CD4-positive, alpha-beta memory T cell (primary cell): ENCODE measurements at regions of chr10 and their contacts with region 1.

Region 1: GRCh38 chr10:6401562-6402348 is 178.3 kb downstream of the PRKCQ start:
- DNase-seq: peak; percentile 57 to 70 (median 65)
- H3K4me3 ChIP-seq: no peak overlapping the region
- H3K4me3 Mint-ChIP-seq: peak overlapping the region in 2 of 8 donors; percentile 51 to 63
- H3K27ac ChIP-seq: no peak overlapping the region
- H3K27ac Mint-ChIP-seq: peak overlapping the region; percentile 32 to 90 (median 64)
- H3K4me1 ChIP-seq: peaks cover 16% of the 10 kb centered on the region
- H3K4me1 Mint-ChIP-seq: peaks cover 8 to 24% (median 13%) of the 10 kb centered on the region in 4 donors
- H3K27me3 ChIP-seq: no peaks in the 10 kb centered on the region
- H3K27me3 Mint-ChIP-seq: peaks cover 0 to 1% of the 10 kb centered on the region in 2 donors

Region 2: GRCh38 chr10:6108603-6109443 is 292.9 kb before region 1 on chr10:
- CTCF ChIA-PET with region 1: interaction called, 127 read pairs
- POLR2A ChIA-PET with region 1: interaction called, 6 read pairs
- intact Hi-C with region 1: loop called (anchors 1 kb)
- DNase-seq: peak; percentile 57 to 69 (median 65)
- H3K4me3 ChIP-seq: no peak overlapping the region
- H3K4me3 Mint-ChIP-seq: peak overlapping the region in 7 of 8 donors; percentile 67 to 85 (median 75)
- H3K27ac ChIP-seq: peak overlapping the region; percentile 45
- H3K27ac Mint-ChIP-seq: peak overlapping the region; percentile 43 to 95 (median 91)
- H3K4me1 ChIP-seq: peaks cover 28% of the 10 kb centered on the region
- H3K4me1 Mint-ChIP-seq: peaks cover 29 to 54% (median 37%) of the 10 kb centered on the region in 4 donors
- H3K27me3 ChIP-seq: no peaks in the 10 kb centered on the region
- H3K27me3 Mint-ChIP-seq: no peaks in the 10 kb centered on the region

Region 3: GRCh38 chr10:6151087-6151977 is 250.4 kb before region 1 on chr10:
- CTCF ChIA-PET with region 1: interaction called, 34 read pairs
- POLR2A ChIA-PET with region 1: interaction called, 3 read pairs
- intact Hi-C with region 1: loop called (anchors 2 kb)
- DNase-seq: peak in 4 of 5 donors; percentile 46 to 64 (median 56)
- H3K4me3 ChIP-seq: no peak overlapping the region
- H3K4me3 Mint-ChIP-seq: peak overlapping the region in 7 of 8 donors; percentile 36 to 75 (median 58)
- H3K27ac ChIP-seq: peak overlapping the region; percentile 1
- H3K27ac Mint-ChIP-seq: peak overlapping the region; percentile 86 to 93 (median 91)
- H3K4me1 ChIP-seq: peaks cover 47% of the 10 kb centered on the region
- H3K4me1 Mint-ChIP-seq: peaks cover 36 to 81% (median 49%) of the 10 kb centered on the region in 4 donors
- H3K27me3 ChIP-seq: no peaks in the 10 kb centered on the region
- H3K27me3 Mint-ChIP-seq: no peaks in the 10 kb centered on the region

Region 4: DNA sequence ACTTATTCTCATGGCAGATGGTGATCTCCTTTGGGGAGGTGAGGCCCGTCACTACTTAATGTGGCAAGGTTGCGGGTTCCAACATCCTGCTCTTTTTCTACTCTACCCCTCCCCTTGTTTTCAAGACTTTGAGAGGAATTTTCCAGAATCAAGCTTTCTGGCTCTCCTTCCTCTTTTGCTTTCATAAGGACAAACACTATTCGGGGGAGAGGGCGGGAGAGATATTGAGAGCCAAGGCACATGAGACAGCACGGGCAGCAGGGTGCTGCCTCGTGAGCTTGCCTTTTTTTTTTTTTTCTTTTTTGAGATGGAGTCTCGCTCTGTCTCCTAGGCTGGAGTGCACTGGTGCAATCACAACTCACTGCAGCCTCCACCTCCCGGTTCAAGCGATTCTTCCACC is 205.9 kb before region 1 on chr10:
- CTCF ChIA-PET with region 1: interaction called, 217 read pairs
- POLR2A ChIA-PET with region 1: interaction called, 12 read pairs
- intact Hi-C with region 1: no loop called
- DNase-seq: no peak
- H3K4me3 ChIP-seq: no peak overlapping the region
- H3K4me3 Mint-ChIP-seq: no peak overlapping the region
- H3K27ac ChIP-seq: no peak overlapping the region
- H3K27ac Mint-ChIP-seq: peak overlapping the region in 1 of 7 donors; percentile 53
- H3K4me1 ChIP-seq: no peaks in the 10 kb centered on the region
- H3K4me1 Mint-ChIP-seq: peaks cover 14 to 46% (median 20%) of the 10 kb centered on the region in 4 donors
- H3K27me3 ChIP-seq: no peaks in the 10 kb centered on the region
- H3K27me3 Mint-ChIP-seq: no peaks in the 10 kb centered on the region

Region 5: GRCh38 chr10:6283655-6284054 is 118.1 kb before region 1 on chr10:
- CTCF ChIA-PET with region 1: no interaction called
- POLR2A ChIA-PET with region 1: no interaction called
- intact Hi-C with region 1: no loop called
- DNase-seq: no peak
- H3K4me3 ChIP-seq: no peak overlapping the region
- H3K4me3 Mint-ChIP-seq: no peak overlapping the region
- H3K27ac ChIP-seq: no peak overlapping the region
- H3K27ac Mint-ChIP-seq: peak overlapping the region in 1 of 7 donors; percentile 8
- H3K4me1 ChIP-seq: peaks cover 9% of the 10 kb centered on the region
- H3K4me1 Mint-ChIP-seq: peaks cover 7 to 20% (median 14%) of the 10 kb centered on the region in 4 donors
- H3K27me3 ChIP-seq: no peaks in the 10 kb centered on the region
- H3K27me3 Mint-ChIP-seq: no peaks in the 10 kb centered on the region

Region 6: GRCh38 chr10:6300106-6300783 is 101.5 kb before region 1 on chr10:
- CTCF ChIA-PET with region 1: interaction called, 12 read pairs
- POLR2A ChIA-PET with region 1: interaction called, 5 read pairs
- intact Hi-C with region 1: no loop called
- DNase-seq: peak; percentile 56 to 76 (median 71)
- H3K4me3 ChIP-seq: peak overlapping the region in 1 of 2 donors; percentile 28
- H3K4me3 Mint-ChIP-seq: peak overlapping the region; percentile 26 to 82 (median 57)
- H3K27ac ChIP-seq: peak overlapping the region; percentile 27
- H3K27ac Mint-ChIP-seq: peak overlapping the region; percentile 72 to 95 (median 91)
- H3K4me1 ChIP-seq: peaks cover 26% of the 10 kb centered on the region
- H3K4me1 Mint-ChIP-seq: peaks cover 16 to 42% (median 28%) of the 10 kb centered on the region in 4 donors
- H3K27me3 ChIP-seq: no peaks in the 10 kb centered on the region
- H3K27me3 Mint-ChIP-seq: no peaks in the 10 kb centered on the region